Left ventricle myocardium superior (tissue), 1 donor: ENCODE measurements at regions of chr10 and their contacts with region 1.

Region 1: GRCh38 chr10:119222537-119222936 is 15.2 kb downstream of the GRK5 start:
- DNase-seq: no peak
- ATAC-seq: peak; percentile 50

Region 2: GRCh38 chr10:119139464-119140067 is 83.0 kb before region 1 on chr10:
- intact Hi-C with region 1: no loop called
- DNase-seq: no peak
- ATAC-seq: peak; percentile 61

Region 3: GRCh38 chr10:119281581-119282071 is 59.1 kb after region 1 on chr10:
- intact Hi-C with region 1: loop called (anchors 5 kb)
- DNase-seq: peak; percentile 92
- ATAC-seq: peak; percentile 70